WTC11 (cell line): ENCODE measurements at regions of chr17 and their contacts with region 1.

Region 1: DNA sequence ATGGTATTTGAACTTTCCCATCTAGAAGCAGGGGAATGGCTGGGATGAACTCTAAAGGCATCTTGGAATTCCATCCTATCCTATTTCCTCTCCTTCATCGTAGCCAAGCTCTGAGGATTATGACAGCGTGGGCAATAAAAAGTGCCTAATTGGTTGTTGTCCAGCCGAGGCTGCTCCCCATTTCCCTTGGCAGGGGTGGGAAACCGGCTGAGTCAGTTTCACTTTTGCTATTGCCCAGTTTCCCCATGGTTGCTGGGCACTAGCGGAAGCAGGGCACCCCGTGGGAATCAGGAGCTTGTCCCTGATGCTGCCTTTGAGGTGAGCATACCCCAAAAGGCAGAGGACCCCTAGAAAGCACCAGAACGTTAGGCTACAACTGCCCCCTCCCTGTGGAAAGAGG is 13.8 kb upstream of the SP2 start:
- DNase-seq: no peak
- ATAC-seq: no peak
- H3K4me3 Mint-ChIP-seq: no peak overlapping the region
- H3K27ac Mint-ChIP-seq: no peak overlapping the region
- H3K4me1 Mint-ChIP-seq: peaks cover 32% of the 10 kb centered on the region
- H3K27me3 Mint-ChIP-seq: peaks cover 14% of the 10 kb centered on the region
- CTCF ChIP-seq: no peak

Region 2: DNA sequence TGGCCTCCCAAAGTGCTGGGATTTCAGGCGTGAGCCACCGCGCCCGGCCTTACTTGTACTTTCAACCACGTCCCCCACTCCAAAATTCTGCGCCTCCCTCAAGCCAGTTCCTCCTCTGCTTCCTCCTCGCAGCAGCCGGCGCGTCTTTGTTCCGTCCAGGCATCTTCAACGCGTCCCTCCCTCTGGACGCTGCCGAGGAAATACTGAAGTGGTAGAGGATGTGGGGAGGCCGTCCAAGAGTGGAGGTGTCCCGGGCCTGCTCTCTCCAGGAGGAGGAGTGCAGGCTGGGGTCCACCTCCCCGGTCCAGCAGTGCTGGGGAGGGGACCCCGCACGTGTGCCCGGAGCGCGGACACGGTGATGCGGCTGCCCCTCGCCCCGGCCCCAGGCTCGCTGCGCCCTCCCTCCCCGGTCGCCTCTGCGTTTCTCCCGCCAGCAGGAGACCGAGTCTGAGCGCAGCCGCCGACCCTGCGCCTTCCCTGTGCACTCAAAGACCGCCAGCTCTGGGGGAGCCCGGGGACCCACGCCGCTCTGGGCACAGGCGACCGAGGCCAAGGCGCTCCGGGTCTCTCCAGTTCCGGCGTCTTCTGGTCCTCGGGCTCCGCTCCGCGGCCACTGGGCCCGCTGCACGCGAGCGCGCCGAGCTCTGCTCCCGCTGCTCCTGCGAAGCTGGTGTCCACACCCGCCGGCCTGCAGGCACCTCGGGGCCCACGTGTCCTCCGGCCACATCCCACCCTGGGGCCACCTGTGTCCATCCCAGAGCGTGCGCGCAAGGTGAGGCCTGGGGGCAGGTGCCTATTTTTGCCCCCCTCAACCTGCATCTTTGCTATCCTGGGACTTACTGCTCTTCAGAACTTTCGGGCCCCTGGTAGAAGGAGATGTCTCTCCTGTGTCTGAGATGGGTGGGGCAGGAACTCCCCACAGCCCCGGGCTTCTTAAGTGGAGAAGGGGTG is 92.4 kb before region 1 on chr17:
- CTCF ChIA-PET with region 1: no interaction called
- POLR2A ChIA-PET with region 1: no interaction called
- DNase-seq: peak; percentile 73
- ATAC-seq: peak; percentile 90
- H3K4me3 Mint-ChIP-seq: peak overlapping the region; percentile 82
- H3K27ac Mint-ChIP-seq: no peak overlapping the region
- H3K4me1 Mint-ChIP-seq: peaks cover 7% of the 10 kb centered on the region; the same call in 1 of the 2 replicates
- H3K27me3 Mint-ChIP-seq: peaks cover 87% of the 10 kb centered on the region
- CTCF ChIP-seq: no peak; the same call in 1 of the 2 replicates

Region 3: GRCh38 chr17:47872021-47872650 is 10.1 kb before region 1 on chr17:
- CTCF ChIA-PET with region 1: interaction called, 14 read pairs
- POLR2A ChIA-PET with region 1: no interaction called
- DNase-seq: peak; percentile 64
- ATAC-seq: peak; percentile 57
- H3K4me3 Mint-ChIP-seq: peak overlapping the region; percentile 70
- H3K27ac Mint-ChIP-seq: no peak overlapping the region
- H3K4me1 Mint-ChIP-seq: peaks cover 56% of the 10 kb centered on the region
- H3K27me3 Mint-ChIP-seq: peaks cover 75% of the 10 kb centered on the region
- CTCF ChIP-seq: no peak

Region 4: GRCh38 chr17:47895856-47896671 is 13.8 kb after region 1 on chr17 and contains the start of gene SP2:
- CTCF ChIA-PET with region 1: interaction called, 10 read pairs
- POLR2A ChIA-PET with region 1: interaction called, 6 read pairs
- DNase-seq: peak; percentile 99
- ATAC-seq: peak; percentile 95
- H3K4me3 Mint-ChIP-seq: peak within 1 kb of the TSS; percentile 97
- H3K27ac Mint-ChIP-seq: peak within 1 kb of the TSS; percentile 96
- H3K4me1 Mint-ChIP-seq: peaks cover 37% of the 10 kb centered on the region
- H3K27me3 Mint-ChIP-seq: no peaks in the 10 kb centered on the region
- CTCF ChIP-seq: no peak
- total RNA-seq, gene SP2: 9.9 to 11.5 TPM (median 10.7 TPM) in 3 replicates